SK-N-SH (cell line): ENCODE measurements at regions of chr7 and their contacts with region 1.

Region 1: DNA sequence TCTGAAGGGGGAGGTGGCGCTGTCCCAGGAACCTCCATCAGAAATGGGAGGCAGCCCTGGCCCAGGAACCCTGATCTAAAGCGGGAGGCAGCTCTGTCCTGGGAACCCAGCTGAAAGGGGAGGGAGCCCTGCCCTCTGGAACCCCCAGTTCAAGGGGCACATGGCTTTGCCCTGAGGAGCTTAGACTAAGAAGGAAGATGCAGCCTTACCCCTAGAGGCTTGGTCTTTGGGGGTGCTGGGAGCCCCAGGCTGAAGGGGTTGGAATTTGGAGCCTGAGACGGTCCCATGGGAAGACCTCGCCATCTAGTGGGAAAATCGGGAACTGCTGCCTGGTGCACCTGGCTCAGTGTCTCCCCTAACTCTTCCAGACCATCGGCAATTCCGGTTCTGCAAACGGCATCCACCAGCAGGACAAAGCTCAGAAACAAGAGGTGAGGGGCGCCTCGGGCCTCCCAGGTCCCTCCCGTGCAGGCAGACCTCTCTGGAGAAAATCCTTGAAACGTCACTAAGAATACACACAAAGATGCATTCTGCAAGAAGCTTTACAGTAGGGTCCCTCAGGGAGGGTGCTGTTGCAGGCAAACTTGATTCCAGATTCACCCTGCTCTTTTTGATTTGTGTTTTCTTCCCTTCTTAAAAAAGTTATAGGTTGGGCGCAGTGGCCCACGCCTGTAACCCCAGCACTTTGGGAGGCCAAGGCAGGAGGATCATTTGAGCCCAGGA is 52.4 kb upstream of the GTF2IRD1 start:
- DNase-seq: peak; percentile 91
- H3K4me3 ChIP-seq: no peak overlapping the region
- H3K27ac ChIP-seq: no peak overlapping the region
- H3K4me1 ChIP-seq: no peaks in the 10 kb centered on the region
- H3K27me3 ChIP-seq: no peaks in the 10 kb centered on the region
- CTCF ChIP-seq: peak; percentile 100
- EP300 ChIP-seq: no peak
- RAD21 ChIP-seq: peak; percentile 97

Region 2: GRCh38 chr7:73952266-73952665 is 449.0 kb before region 1 on chr7:
- CTCF ChIA-PET with region 1: no interaction called
- POLR2A ChIA-PET with region 1: no interaction called
- DNase-seq: no peak
- H3K4me3 ChIP-seq: no peak overlapping the region
- H3K27ac ChIP-seq: no peak overlapping the region
- H3K4me1 ChIP-seq: no peaks in the 10 kb centered on the region
- H3K27me3 ChIP-seq: no peaks in the 10 kb centered on the region
- CTCF ChIP-seq: no peak
- EP300 ChIP-seq: no peak
- RAD21 ChIP-seq: no peak

Region 3: DNA sequence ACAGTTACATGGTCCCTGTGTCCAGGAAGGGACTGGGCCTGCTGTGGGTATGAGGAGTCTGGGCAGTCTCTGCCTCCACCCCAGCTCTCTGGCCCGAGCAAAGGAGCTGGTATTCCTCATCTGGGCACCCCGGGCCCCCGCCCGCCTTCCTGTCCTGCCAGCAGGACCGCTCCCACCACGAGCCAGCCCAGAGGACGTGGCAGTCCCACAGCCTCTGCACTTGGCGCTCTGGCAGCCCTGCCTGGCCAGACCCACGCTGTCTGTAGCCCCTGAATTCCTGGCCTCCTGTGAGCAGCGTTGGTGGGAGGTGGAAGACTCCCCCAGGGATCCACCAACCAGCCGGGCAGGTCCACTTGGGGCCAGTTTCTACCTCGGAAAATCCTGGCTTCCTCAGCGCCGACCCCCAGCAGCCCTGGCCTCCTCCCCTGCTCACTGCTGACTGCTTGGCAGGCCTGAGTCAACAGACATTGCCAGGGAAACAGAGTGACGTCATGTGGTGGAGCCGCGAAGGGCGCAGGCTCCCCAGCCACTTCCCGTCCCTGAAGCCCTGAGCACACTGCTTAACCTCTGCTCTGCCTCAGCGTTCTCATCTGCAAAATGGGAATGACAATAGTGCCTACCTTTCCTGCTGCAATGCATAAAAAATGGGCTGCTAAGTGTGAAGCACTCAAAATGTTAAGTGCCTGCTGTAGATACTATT is 339.3 kb before region 1 on chr7:
- CTCF ChIA-PET with region 1: interaction called, 15 read pairs
- POLR2A ChIA-PET with region 1: no interaction called
- DNase-seq: peak; percentile 79
- H3K4me3 ChIP-seq: 0 out of 4 replicates have a peak overlapping the region, but pooled peaks of 1 of the 2 experiments have one; percentile 5
- H3K27ac ChIP-seq: peak overlapping the region in 1 of 2 experiments; percentile 87; a peak in 2 of 4 replicates
- H3K4me1 ChIP-seq: no peaks in the 10 kb centered on the region
- H3K27me3 ChIP-seq: no peaks in the 10 kb centered on the region
- CTCF ChIP-seq: no peak
- EP300 ChIP-seq: no peak
- RAD21 ChIP-seq: no peak

Region 4: DNA sequence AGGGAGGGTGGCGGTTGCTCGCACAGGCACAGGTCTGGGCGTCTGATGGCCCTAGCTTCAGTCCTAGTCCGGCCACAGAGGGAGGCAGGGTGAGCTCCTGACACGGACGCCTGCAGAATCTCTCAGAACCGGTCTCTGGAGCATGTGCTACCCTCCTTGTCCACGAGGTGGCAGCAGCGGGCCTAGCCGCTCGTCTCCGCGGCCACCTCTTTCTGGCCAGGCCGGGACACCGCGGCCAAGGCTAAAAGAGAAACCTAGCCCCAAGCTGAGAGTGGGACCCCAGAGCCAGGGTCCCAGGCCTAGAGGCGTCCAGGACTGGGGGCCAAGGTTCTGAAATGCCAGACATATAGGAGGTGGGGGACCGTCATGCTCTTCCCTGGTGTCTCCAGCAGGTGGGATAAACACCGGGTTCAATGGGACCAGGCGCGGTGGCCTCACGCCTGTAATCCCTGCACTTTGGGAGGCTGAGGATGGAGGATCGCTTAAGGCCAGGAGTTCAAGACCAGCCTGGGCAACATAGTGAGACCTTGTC is 194.6 kb before region 1 on chr7:
- CTCF ChIA-PET with region 1: interaction called, 537 read pairs
- POLR2A ChIA-PET with region 1: interaction called, 5 read pairs
- DNase-seq: peak; percentile 94
- H3K4me3 ChIP-seq: no peak overlapping the region
- H3K27ac ChIP-seq: no peak overlapping the region
- H3K4me1 ChIP-seq: peaks cover 0 to 4% of the 10 kb centered on the region in 2 experiments; a peak in 3 of 4 replicates
- H3K27me3 ChIP-seq: no peaks in the 10 kb centered on the region
- CTCF ChIP-seq: peak; percentile 100
- EP300 ChIP-seq: no peak
- RAD21 ChIP-seq: peak; percentile 91

Region 5: GRCh38 chr7:74272305-74273038 is 128.8 kb before region 1 on chr7:
- CTCF ChIA-PET with region 1: interaction called, 42 read pairs
- POLR2A ChIA-PET with region 1: no interaction called
- DNase-seq: peak; percentile 68
- H3K4me3 ChIP-seq: no peak overlapping the region
- H3K27ac ChIP-seq: peak overlapping the region; percentile 56 to 99
- H3K4me1 ChIP-seq: peaks cover 4 to 16% of the 10 kb centered on the region in 2 experiments; a peak in 3 of 4 replicates
- H3K27me3 ChIP-seq: no peaks in the 10 kb centered on the region
- CTCF ChIP-seq: no peak
- EP300 ChIP-seq: peak in 1 of 2 experiments; percentile 67; a peak in 2 of 4 replicates
- RAD21 ChIP-seq: no peak

Region 6: GRCh38 chr7:74360008-74360407 is 41.3 kb before region 1 on chr7:
- CTCF ChIA-PET with region 1: interaction called, 22 read pairs
- POLR2A ChIA-PET with region 1: no interaction called
- DNase-seq: no peak
- H3K4me3 ChIP-seq: no peak overlapping the region
- H3K27ac ChIP-seq: no peak overlapping the region
- H3K4me1 ChIP-seq: peaks cover 0 to 1% of the 10 kb centered on the region in 2 experiments; a peak in 1 of 4 replicates
- H3K27me3 ChIP-seq: no peaks in the 10 kb centered on the region
- CTCF ChIP-seq: no peak
- EP300 ChIP-seq: no peak
- RAD21 ChIP-seq: no peak

Region 7: DNA sequence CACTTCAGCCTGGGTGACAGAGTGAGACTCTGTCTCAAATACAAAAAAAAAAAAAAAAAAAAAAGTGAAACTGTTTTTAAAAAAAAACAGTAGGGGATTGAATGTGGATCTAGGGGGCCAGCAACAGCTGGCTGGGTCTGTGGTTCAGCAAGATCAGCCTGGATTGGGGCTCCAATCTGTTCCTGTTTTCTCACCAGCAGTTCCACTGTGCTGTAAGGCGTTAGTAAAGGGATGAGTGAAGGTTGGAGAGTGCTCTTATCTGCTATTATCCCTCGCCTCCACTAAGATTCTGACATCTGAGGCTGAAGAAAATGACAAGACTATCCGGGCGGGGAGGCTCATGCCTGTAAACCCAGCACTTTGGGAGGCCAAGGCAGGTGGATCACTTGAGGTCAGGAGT is 10.8 kb after region 1 on chr7:
- CTCF ChIA-PET with region 1: interaction called, 53 read pairs
- POLR2A ChIA-PET with region 1: no interaction called
- DNase-seq: no peak
- H3K4me3 ChIP-seq: no peak overlapping the region
- H3K27ac ChIP-seq: no peak overlapping the region
- H3K4me1 ChIP-seq: no peaks in the 10 kb centered on the region
- H3K27me3 ChIP-seq: no peaks in the 10 kb centered on the region
- CTCF ChIP-seq: no peak
- EP300 ChIP-seq: no peak
- RAD21 ChIP-seq: no peak